Esophagus muscularis mucosa (tissue), 4 donors: ENCODE measurements at regions of chr7 and their contacts with region 1.

Region 1: DNA sequence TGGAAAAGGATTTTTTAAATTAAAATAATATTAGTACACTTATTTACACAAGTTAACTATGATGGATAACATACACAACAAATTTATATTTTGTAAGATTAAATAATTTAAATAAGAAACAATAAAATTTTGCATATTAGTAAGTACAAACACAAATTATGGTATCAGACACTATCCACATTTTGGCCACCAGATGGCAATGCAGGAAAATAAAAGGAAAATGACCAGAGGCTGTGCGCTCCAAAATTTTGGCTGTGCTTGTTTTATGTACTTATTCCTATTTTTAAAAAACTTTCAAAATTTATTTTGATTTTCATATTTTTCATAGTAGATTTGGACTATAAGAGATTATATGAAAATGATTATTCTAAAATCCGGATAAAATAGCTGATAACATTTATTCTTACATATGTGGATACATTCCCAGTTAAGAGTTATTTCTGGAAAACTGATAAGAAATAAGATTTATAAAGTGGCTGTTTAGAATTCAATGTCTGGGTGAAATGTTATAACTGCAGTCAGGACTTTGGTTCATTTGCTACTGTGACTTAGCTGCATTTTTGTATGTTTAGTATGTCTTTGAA is 274.7 kb upstream of the HGF start:
- DNase-seq: no peak
- H3K4me3 ChIP-seq: no peak overlapping the region
- H3K27ac ChIP-seq: no peak overlapping the region
- H3K4me1 ChIP-seq: peaks cover 0 to 10% (median 6%) of the 10 kb centered on the region in 4 donors
- H3K27me3 ChIP-seq: no peaks in the 10 kb centered on the region
- CTCF ChIP-seq: peak; percentile 72 to 79 (median 74)
- EP300 ChIP-seq: no peak
- POLR2A ChIP-seq: no peak

Region 2: DNA sequence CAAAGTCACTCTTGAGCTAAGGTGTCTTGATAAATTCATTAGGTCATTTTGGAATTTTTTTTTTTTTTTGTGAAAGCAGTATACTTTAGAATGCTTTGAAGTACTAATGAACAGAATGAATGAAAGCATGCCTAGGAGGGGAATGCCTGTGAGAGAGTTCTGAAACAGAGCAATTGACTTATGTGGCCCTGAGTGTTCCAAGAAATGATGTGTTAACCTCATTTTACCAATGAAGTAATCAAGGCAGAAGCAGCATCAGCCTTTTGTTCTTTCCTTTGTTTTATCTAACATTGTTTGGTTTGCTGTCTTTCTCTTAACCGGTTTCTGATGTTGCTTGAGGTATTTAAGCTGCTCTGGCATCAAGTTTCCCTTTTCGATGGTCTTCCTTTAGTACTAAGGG is 120.1 kb before region 1 on chr7:
- intact Hi-C with region 1: no loop called
- DNase-seq: no peak
- H3K4me3 ChIP-seq: no peak overlapping the region
- H3K27ac ChIP-seq: no peak overlapping the region
- H3K4me1 ChIP-seq: no peaks in the 10 kb centered on the region
- H3K27me3 ChIP-seq: no peaks in the 10 kb centered on the region
- CTCF ChIP-seq: no peak
- EP300 ChIP-seq: no peak
- POLR2A ChIP-seq: no peak

Region 3: GRCh38 chr7:82057476-82057875 is 12.9 kb after region 1 on chr7:
- intact Hi-C with region 1: no loop called
- DNase-seq: no peak
- H3K4me3 ChIP-seq: no peak overlapping the region
- H3K27ac ChIP-seq: no peak overlapping the region
- H3K4me1 ChIP-seq: peaks cover 0 to 8% (median 0%) of the 10 kb centered on the region in 4 donors
- H3K27me3 ChIP-seq: no peaks in the 10 kb centered on the region
- CTCF ChIP-seq: no peak
- EP300 ChIP-seq: no peak
- POLR2A ChIP-seq: no peak

Region 4: GRCh38 chr7:82481499-82482097 is 437.0 kb after region 1 on chr7:
- intact Hi-C with region 1: loop called (anchors 5 kb)
- DNase-seq: no peak
- H3K4me3 ChIP-seq: no peak overlapping the region
- H3K27ac ChIP-seq: no peak overlapping the region
- H3K4me1 ChIP-seq: no peaks in the 10 kb centered on the region
- H3K27me3 ChIP-seq: no peaks in the 10 kb centered on the region
- CTCF ChIP-seq: peak; percentile 72 to 87 (median 75)
- EP300 ChIP-seq: no peak
- POLR2A ChIP-seq: no peak

Region 5: DNA sequence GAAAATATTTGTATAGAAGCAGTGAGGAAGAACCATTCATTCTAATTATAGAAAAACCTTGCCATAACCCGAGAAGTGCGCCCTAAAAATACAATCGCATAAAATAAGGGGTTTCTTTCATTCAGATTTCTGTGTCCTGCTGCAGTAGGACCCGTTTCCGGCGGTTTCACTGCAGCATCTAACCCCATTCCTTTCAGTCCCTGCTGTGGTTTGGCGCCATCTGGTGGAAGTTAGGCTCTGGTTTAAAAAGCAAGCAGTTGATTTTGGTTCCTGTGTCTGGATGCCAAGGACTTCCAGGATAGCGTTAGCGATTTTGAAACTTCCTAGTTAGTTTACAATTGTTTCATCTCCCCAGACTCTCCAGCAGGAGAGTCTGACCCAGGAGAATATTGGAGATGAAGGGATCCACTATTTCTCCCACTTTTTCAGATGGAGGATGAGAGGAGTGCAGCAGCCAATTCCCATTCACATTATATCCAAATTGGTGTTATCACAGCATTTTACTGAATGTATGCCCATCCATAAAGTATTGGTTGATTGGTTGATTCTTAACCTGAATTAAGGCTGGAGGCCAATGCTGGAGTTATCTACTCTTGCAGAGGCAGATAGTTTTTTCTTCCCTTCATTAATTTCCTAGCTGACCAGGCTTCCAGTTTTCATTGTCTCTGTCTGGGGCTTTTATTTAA is 527.7 kb after region 1 on chr7:
- intact Hi-C with region 1: loop called (anchors 5 kb)
- DNase-seq: peak; percentile 94
- H3K4me3 ChIP-seq: peak overlapping the region in 1 of 4 donors; percentile 1
- H3K27ac ChIP-seq: no peak overlapping the region
- H3K4me1 ChIP-seq: peaks cover 7 to 13% (median 9%) of the 10 kb centered on the region in 4 donors
- H3K27me3 ChIP-seq: no peaks in the 10 kb centered on the region
- CTCF ChIP-seq: peak; percentile 82 to 95 (median 89)
- EP300 ChIP-seq: no peak
- POLR2A ChIP-seq: no peak

Region 6: DNA sequence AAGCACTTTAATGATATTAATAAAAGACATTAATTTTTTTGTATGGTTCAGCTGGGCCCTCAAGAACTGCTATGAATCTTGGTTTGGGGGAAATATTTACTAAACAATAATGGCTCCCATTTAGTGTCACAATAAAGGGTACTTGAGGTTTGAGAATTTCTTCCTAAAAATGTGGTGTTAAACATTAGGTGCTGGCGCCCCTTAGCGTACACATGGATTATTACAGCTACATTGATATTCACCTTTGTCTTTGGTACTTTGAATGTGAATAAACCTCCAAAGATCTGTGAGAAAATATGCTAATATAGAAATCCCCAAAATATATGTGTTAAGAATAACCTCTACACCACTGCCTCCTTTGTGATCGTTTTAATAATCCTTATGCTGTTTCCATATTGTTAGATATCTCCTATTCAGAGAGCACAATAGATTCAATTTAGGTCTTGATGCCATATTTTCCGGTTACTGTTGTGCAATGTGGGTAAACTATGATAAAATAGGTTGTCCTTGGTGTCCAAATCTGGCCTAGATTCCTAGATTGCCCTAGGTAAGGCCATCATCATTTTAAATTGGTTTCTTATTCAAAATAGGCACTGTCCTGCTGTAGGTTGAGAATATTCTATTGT is 560.8 kb after region 1 on chr7:
- intact Hi-C with region 1: loop called (anchors 10 kb)
- DNase-seq: no peak
- H3K4me3 ChIP-seq: no peak overlapping the region
- H3K27ac ChIP-seq: no peak overlapping the region
- H3K4me1 ChIP-seq: no peaks in the 10 kb centered on the region
- H3K27me3 ChIP-seq: no peaks in the 10 kb centered on the region
- CTCF ChIP-seq: peak; percentile 58 to 75 (median 63)
- EP300 ChIP-seq: no peak
- POLR2A ChIP-seq: no peak